ENCODE measurements at regions of chr14 and their contacts with region 1.

Region 1: GRCh38 chr14:51957950-51958349 is 31.4 kb upstream of the RTRAF start:
- DNase-seq: no peak
- ATAC-seq: peak in 5 of 8 donors; percentile 29 to 61 (median 39)
- H3K4me3 ChIP-seq: no peak overlapping the region
- H3K27ac ChIP-seq: no peak overlapping the region
- H3K4me1 ChIP-seq: peaks cover 0 to 18% (median 4%) of the 10 kb centered on the region in 9 donors
- H3K27me3 ChIP-seq: no peaks in the 10 kb centered on the region
- CTCF ChIP-seq: no peak

Region 2: GRCh38 chr14:51884086-51884927 is 73.6 kb before region 1 on chr14:
- intact Hi-C with region 1: loop called in 1 of 10 experiments (anchors 10 kb)
- DNase-seq: peak in 1 of 2 donors; percentile 22
- ATAC-seq: peak; percentile 57 to 89 (median 80)
- H3K4me3 ChIP-seq: peak overlapping the region in 2 of 10 donors; percentile 2 to 9
- H3K27ac ChIP-seq: peak overlapping the region in 7 of 10 donors; percentile 1 to 67 (median 40)
- H3K4me1 ChIP-seq: peaks cover 0 to 52% (median 10%) of the 10 kb centered on the region in 9 donors
- H3K27me3 ChIP-seq: no peaks in the 10 kb centered on the region
- CTCF ChIP-seq: no peak